ENCODE measurements at regions of chr12 and their contacts with region 1.

Region 1: DNA sequence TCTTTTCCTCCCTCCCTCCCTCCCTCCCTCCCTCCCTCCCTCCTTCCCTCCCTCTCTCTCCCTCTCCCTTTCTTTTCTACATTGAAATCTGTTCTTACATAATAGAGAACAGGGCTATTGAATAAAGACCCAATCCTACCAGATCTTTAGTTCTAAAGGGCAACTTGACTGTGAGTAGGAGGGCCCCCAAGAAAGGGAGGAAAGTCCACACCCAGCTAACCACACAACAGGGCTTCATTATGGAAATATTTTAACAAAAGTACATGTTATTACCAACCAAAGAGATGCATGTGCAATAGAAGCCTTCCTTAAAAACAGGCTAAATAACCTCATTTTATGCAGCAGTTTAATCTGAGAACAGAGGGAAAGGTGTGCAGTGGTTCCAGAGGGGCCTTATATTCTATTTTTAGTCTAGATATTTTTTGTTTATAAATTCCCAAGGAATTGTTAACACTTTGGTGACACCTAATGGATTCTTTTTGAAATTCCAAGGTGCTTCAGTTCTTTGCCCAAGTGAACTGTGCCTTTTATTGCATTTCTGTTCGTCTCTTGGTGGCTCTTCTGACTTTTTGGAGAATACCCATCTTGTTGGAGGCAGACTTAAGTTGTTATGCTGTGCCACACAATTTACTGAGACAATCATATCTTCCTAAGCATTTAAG is 63.0 kb downstream of the GNS start:
- DNase-seq: no peak
- H3K4me3 Mint-ChIP-seq: no peak overlapping the region
- H3K27ac Mint-ChIP-seq: peak overlapping the region; percentile 64
- H3K4me1 Mint-ChIP-seq: peaks cover 80% of the 10 kb centered on the region
- H3K27me3 Mint-ChIP-seq: no peaks in the 10 kb centered on the region

Region 2: DNA sequence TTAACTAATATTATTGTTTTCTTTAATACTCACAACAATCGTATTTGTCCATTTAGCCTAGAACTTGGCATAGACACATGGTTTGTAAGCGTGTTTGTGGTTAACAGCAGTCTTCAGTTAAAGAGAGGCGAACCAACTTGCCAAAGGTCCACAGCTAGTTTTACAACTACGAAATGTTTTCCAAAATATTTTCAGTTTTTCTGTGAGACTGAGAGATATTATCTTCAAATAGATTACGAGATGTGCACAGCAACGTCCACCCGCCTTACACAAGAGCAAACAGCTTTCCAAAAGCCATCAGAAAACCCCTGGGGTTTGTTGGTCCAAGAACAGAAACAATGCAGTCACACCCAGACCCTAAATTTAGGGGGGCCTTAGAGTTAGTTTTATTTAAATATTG is 144.5 kb before region 1 on chr12:
- CTCF ChIA-PET with region 1: interaction called, 110 read pairs
- DNase-seq: no peak
- H3K4me3 Mint-ChIP-seq: no peak overlapping the region
- H3K27ac Mint-ChIP-seq: no peak overlapping the region
- H3K4me1 Mint-ChIP-seq: peaks cover 11% of the 10 kb centered on the region
- H3K27me3 Mint-ChIP-seq: peaks cover 30% of the 10 kb centered on the region

Region 3: GRCh38 chr12:64610149-64610678 is 86.0 kb before region 1 on chr12 and contains the start of gene RASSF3:
- CTCF ChIA-PET with region 1: interaction called, 23 read pairs
- DNase-seq: peak; percentile 88
- H3K4me3 Mint-ChIP-seq: peak within 1 kb of the TSS; percentile 98
- H3K27ac Mint-ChIP-seq: peak within 1 kb of the TSS; percentile 97
- H3K4me1 Mint-ChIP-seq: peaks cover 43% of the 10 kb centered on the region
- H3K27me3 Mint-ChIP-seq: no peaks in the 10 kb centered on the region

Region 4: DNA sequence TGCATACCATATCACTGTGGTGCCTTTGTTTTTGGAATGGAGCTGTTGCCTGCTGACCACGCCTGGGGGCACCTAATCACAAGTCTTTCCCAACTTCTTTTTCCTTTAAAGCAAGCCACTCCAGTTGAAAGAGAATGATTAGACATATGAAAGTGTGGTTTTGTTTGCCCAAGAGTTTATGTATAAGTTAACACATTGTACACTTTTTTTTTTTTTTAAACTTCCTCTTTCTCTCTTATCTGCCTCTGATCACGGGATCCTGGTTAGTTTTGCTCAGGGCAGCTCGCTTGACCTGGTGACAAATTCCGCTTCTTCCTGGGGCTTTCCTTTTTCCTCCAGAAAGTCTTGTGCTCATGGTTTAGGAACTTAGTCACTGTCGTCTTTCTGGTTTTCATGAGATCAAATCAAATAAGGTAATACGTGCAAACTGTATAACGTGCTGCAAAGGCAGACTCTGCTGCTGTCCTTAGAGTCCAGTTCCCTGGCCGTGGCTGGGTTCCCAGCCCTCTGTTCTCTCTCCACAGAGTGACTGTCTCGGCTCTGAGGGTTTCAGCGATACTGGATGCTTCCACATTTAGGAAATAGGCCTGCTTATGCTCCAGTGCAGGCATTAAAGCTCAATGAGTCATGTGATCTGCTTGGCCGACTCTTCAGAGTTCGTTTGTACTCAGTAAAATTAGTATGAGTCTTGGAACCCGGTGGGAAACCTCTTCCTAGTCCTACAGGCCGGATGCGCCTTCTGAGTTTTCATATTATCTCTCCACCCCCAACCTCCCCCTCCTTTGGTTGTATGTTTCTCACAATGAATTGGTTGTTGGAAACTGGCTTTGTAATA is 70.8 kb before region 1 on chr12:
- CTCF ChIA-PET with region 1: interaction called, 15 read pairs
- DNase-seq: peak; percentile 26
- H3K4me3 Mint-ChIP-seq: peak overlapping the region; percentile 69
- H3K27ac Mint-ChIP-seq: peak overlapping the region; percentile 85
- H3K4me1 Mint-ChIP-seq: peaks cover 58% of the 10 kb centered on the region
- H3K27me3 Mint-ChIP-seq: no peaks in the 10 kb centered on the region

Region 5: GRCh38 chr12:64669270-64669842 is 26.9 kb before region 1 on chr12:
- CTCF ChIA-PET with region 1: interaction called, 12 read pairs
- DNase-seq: peak; percentile 66
- H3K4me3 Mint-ChIP-seq: peak overlapping the region; percentile 82
- H3K27ac Mint-ChIP-seq: peak overlapping the region; percentile 99
- H3K4me1 Mint-ChIP-seq: peaks cover 94% of the 10 kb centered on the region
- H3K27me3 Mint-ChIP-seq: no peaks in the 10 kb centered on the region

Measured in activated naive CD4-positive, alpha-beta T cell treated with anti-CD3 and anti-CD28 coated beads, Interleukin-2, amount 10 ng/mL, durations not matched to agents 7 days and 5 days (primary cell).